ENCODE measurements at regions of chr12 and their contacts with region 1.

Region 1: DNA sequence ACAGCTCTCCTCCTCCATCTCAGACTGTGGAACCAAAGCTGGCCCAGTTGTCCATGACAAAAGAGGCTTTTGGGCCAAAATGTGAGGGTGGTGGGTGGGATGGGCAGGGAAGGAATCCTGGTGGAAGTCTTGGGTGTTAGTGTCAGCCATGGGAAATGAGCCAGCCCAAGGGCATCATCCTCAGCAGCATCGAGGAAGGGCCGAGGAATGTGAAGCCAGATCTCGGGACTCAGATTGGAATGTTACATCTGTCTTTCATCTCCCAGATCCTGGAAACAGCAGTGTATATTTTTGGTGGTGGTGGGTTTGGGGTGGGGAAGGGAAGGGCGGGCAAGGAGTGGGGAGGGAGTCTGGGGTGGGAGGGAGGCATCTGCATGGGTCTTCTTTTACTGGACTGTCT is 11.8 kb upstream of the TAMALIN start:
- DNase-seq: no peak
- H3K4me3 ChIP-seq: no peak overlapping the region
- H3K27me3 ChIP-seq: no peaks in the 10 kb centered on the region
- CTCF ChIP-seq: no peak

Region 2: GRCh38 chr12:51788876-51789275 is 206.1 kb before region 1 on chr12:
- CTCF ChIA-PET with region 1: no interaction called
- POLR2A ChIA-PET with region 1: no interaction called
- DNase-seq: peak; percentile 44
- H3K4me3 ChIP-seq: no peak overlapping the region
- H3K27me3 ChIP-seq: no peaks in the 10 kb centered on the region
- CTCF ChIP-seq: no peak

Region 3: DNA sequence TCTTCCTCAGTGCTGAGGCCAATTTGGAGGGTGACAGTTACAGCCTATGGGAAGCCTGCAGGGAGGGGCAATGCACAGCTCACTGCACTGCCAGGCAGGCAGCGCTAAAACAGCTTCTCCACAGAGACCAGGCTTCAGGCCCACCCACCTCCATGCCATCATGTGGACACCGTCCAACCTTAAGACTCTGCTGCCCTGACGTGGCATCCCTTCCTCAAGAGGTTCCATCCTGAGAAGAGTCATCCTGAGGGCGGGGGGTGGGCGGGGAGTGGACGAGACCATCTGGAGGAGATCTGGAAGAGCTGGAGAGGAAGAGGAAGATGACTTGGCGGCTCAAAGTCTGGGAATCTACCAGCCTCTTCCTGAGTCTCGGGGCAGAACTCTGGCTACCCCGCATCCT is 96.0 kb before region 1 on chr12:
- CTCF ChIA-PET with region 1: interaction called, 30 read pairs
- POLR2A ChIA-PET with region 1: interaction called, 4 read pairs
- DNase-seq: no peak
- H3K4me3 ChIP-seq: no peak overlapping the region
- H3K27me3 ChIP-seq: no peaks in the 10 kb centered on the region
- CTCF ChIP-seq: no peak

Region 4: GRCh38 chr12:51961834-51962233 is 33.1 kb before region 1 on chr12:
- CTCF ChIA-PET with region 1: interaction called, 10 read pairs
- POLR2A ChIA-PET with region 1: no interaction called
- DNase-seq: no peak
- H3K4me3 ChIP-seq: no peak overlapping the region
- H3K27me3 ChIP-seq: no peaks in the 10 kb centered on the region
- CTCF ChIP-seq: no peak

Region 5: DNA sequence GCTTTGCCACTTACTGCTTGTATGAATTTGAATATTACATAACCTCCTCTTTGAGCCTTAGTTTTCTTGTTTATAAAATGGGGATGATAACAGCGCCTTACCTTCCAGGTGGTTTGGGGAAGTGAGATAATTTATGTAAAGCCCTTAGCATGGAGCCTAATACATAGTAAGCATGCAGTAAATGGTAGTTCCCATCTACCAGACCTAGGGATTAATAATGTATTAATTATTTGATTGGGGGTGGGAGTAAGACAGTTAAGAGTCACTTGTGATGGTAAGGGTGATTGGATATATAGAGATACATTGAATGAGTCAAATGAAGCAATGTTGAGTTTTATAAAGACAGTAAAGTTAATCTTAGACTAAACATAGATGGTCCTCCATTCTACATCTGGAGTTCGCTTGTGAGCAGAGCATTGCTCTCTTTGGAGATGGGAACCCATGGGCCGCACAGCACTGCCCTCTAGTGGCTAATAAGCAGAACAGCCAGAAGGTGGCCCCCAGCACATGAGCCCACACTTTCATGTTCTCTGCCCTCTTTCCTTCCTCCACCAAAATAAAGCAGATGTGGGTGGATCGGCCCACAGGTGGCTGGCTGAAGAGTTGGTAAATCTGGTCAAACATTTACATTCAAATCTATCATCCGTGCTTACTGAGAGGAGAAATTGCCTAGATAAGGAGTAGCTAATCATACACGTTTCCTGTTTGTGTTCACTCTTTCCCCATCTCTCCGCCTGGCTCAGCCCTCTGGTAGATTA is 14.7 kb before region 1 on chr12:
- CTCF ChIA-PET with region 1: interaction called, 56 read pairs
- POLR2A ChIA-PET with region 1: no interaction called
- DNase-seq: no peak
- H3K4me3 ChIP-seq: no peak overlapping the region
- H3K27me3 ChIP-seq: no peaks in the 10 kb centered on the region
- CTCF ChIP-seq: peak; percentile 96

Region 6: DNA sequence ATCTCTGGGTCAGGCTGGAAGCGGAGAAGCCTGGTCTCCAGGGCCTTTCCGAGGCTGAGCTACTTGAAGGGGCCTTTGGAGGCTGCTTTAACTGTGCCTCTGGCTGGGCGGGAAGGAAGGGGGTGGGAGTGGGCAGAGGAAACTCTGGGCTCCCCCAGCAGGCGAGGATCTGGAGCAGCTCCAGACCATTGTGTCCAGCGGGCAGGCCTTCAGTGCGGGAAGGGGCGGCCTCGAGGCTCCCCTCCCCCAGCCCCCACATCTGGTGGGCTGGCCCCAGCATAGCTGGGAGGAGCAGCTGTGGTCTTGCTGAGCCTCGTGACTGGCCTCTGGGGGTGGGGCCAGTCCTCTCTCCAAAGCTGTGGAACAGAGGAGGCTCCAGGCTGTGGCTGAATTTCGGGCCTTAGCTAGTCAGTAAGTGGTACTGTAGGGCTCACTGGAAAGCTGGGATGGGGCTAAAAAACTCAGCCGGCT is 15.2 kb after region 1 on chr12:
- CTCF ChIA-PET with region 1: interaction called, 82 read pairs
- POLR2A ChIA-PET with region 1: no interaction called
- DNase-seq: no peak
- H3K4me3 ChIP-seq: no peak overlapping the region
- H3K27me3 ChIP-seq: peaks cover 6% of the 10 kb centered on the region; the same call in 1 of the 2 replicates
- CTCF ChIP-seq: no peak

Region 7: DNA sequence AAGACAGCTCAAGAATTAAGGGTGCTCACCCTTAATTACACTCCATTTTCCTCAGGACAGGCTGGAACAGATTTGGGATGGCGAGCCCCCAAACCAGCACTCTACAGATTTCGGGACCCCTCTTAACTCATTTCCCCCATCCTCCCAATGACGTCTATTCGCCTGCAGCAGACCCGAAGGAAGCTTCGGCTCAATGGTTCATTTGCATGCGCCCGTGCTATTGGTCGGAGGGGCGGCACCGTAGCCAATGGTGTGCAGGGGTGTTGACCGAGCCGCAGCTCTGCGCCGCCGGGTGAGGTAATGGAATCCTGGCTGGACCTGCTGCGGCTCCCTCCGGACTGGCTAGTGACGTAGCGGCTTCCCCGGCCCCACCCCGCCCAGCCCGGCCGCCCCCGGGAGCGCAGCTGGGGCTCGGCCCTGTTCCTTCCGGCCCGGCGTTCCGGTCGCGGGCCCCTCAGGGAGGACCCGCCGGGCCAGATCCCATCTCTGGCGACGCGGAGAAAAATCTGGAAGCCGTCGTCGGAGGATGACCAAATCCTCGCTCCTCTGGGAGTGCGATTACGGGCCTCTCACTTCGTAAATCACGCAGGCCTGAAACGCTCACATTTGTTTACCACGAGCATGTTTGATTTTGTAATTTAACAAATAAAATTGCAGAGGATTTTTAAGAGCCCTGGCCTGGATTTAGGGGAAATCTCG is 38.0 kb after region 1 on chr12:
- CTCF ChIA-PET with region 1: interaction called, 16 read pairs
- POLR2A ChIA-PET with region 1: no interaction called
- DNase-seq: peak; percentile 86
- H3K4me3 ChIP-seq: peak overlapping the region; percentile 31
- H3K27me3 ChIP-seq: no peaks in the 10 kb centered on the region
- CTCF ChIP-seq: no peak

Region 8: GRCh38 chr12:52082988-52083637 is 88.2 kb after region 1 on chr12:
- CTCF ChIA-PET with region 1: interaction called, 29 read pairs
- POLR2A ChIA-PET with region 1: no interaction called
- DNase-seq: no peak
- H3K4me3 ChIP-seq: no peak overlapping the region
- H3K27me3 ChIP-seq: no peaks in the 10 kb centered on the region
- CTCF ChIP-seq: peak; percentile 99

Measured in BJ (cell line).